ENCODE measurements at regions of chr2 and their contacts with region 1.

Region 1: GRCh38 chr2:149597668-149598326 is 10.2 kb upstream of the MMADHC start:
- DNase-seq: peak; percentile 66 to 72 (median 71)
- H3K4me3 ChIP-seq: no peak overlapping the region
- H3K4me3 Mint-ChIP-seq: peak overlapping the region in 5 of 8 donors; percentile 4 to 56 (median 28)
- H3K27ac ChIP-seq: no peak overlapping the region
- H3K27ac Mint-ChIP-seq: peak overlapping the region in 5 of 7 donors; percentile 5 to 59 (median 51)
- H3K4me1 ChIP-seq: peaks cover 14% of the 10 kb centered on the region
- H3K4me1 Mint-ChIP-seq: peaks cover 13 to 18% (median 15%) of the 10 kb centered on the region in 4 donors
- H3K27me3 ChIP-seq: no peaks in the 10 kb centered on the region
- H3K27me3 Mint-ChIP-seq: peaks cover 3 to 4% of the 10 kb centered on the region in 2 donors

Region 2: DNA sequence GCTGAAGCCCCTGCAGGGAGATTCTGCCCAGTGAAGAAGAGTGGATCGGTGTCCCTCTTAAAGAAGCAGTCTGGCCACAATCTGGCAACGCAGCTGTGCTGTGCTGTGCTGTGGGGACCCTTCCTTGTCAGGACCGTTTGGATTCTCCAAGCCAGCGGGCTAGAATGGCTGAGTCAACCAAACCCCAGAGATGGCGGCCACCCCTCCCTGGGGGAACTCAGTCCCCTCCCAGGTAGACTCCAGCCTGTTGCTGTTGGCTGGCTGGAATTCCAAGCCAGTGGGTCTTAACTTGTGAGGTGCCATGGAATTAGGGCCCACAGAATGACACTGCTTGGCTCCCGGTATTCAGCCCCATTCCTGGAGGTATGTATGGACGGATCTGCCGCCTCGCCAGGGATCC is 72.5 kb before region 1 on chr2:
- CTCF ChIA-PET with region 1: no interaction called
- POLR2A ChIA-PET with region 1: no interaction called
- intact Hi-C with region 1: no loop called
- DNase-seq: no peak
- H3K4me3 ChIP-seq: no peak overlapping the region
- H3K4me3 Mint-ChIP-seq: no peak overlapping the region
- H3K27ac ChIP-seq: no peak overlapping the region
- H3K27ac Mint-ChIP-seq: no peak overlapping the region
- H3K4me1 ChIP-seq: no peaks in the 10 kb centered on the region
- H3K4me1 Mint-ChIP-seq: no peaks in the 10 kb centered on the region
- H3K27me3 ChIP-seq: peaks cover 6% of the 10 kb centered on the region
- H3K27me3 Mint-ChIP-seq: peaks cover 6 to 14% of the 10 kb centered on the region in 2 donors

Region 3: DNA sequence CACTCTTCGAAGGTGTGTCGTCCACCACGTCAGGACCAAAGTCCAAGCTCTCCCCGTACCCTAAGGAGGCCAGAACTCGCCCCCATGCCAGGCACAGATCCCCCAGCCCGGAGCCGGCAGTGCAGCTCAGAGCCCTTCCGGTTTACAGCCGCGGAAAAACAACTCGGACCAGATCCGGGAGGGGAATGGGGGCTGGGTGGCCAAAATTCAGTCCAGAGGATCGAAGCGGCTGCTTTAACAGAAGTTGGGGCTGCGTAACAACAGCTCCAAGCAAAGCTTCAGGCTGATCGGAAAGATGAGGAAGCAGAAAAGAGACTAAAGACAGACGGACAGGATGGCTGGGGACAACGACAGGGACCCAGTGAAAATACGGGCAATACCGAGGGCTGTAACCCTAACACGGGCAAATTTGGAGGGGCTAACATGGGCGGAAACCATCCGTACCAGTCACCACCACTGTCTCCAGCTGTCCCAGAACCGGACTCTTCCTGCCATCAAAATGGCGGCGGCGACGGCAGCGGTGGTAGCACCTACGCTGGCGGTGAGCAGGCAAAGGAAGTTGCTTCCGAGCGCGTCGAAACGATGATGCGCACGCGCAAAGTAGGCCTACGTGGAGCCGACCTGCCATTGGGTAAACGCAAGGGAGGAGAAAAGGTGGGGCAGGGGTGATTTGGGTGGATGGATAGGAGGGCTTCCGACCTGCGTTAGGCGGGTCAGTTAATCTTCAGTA is 10.4 kb before region 1 on chr2 and contains the start of gene MMADHC:
- CTCF ChIA-PET with region 1: interaction called, 6 read pairs
- POLR2A ChIA-PET with region 1: interaction called, 6 read pairs
- intact Hi-C with region 1: loop called (anchors 1 kb)
- DNase-seq: peak; percentile 90 to 93 (median 93)
- H3K4me3 ChIP-seq: peak within 1 kb of the TSS; percentile 90 to 91
- H3K4me3 Mint-ChIP-seq: peak within 1 kb of the TSS; percentile 93 to 100 (median 98)
- H3K27ac ChIP-seq: peak within 1 kb of the TSS; percentile 98
- H3K27ac Mint-ChIP-seq: peak within 1 kb of the TSS; percentile 96 to 100 (median 99)
- H3K4me1 ChIP-seq: peaks cover 40% of the 10 kb centered on the region
- H3K4me1 Mint-ChIP-seq: peaks cover 22 to 55% (median 42%) of the 10 kb centered on the region in 4 donors
- H3K27me3 ChIP-seq: no peaks in the 10 kb centered on the region
- H3K27me3 Mint-ChIP-seq: peaks cover 3 to 17% of the 10 kb centered on the region in 2 donors
- total RNA-seq, gene MMADHC: 66.4 to 69.4 TPM

Region 4: GRCh38 chr2:150487537-150488429 is 890.0 kb after region 1 on chr2 and contains the start of gene RND3:
- CTCF ChIA-PET with region 1: no interaction called
- POLR2A ChIA-PET with region 1: no interaction called
- intact Hi-C with region 1: loop called (anchors 2 kb)
- DNase-seq: peak in 1 of 5 donors; percentile 1
- H3K4me3 ChIP-seq: no peak within 1 kb of the TSS
- H3K4me3 Mint-ChIP-seq: peak within 1 kb of the TSS in 6 of 8 donors; percentile 9 to 75 (median 54)
- H3K27ac ChIP-seq: no peak within 1 kb of the TSS
- H3K27ac Mint-ChIP-seq: no peak within 1 kb of the TSS
- H3K4me1 ChIP-seq: no peaks in the 10 kb centered on the region
- H3K4me1 Mint-ChIP-seq: peaks cover 4 to 21% (median 8%) of the 10 kb centered on the region in 4 donors
- H3K27me3 ChIP-seq: peaks cover 5% of the 10 kb centered on the region
- H3K27me3 Mint-ChIP-seq: peaks cover 28 to 44% of the 10 kb centered on the region in 2 donors
- total RNA-seq, gene RND3: not detected

Region 5: GRCh38 chr2:151051574-151052220 is 1453.9 kb after region 1 on chr2:
- CTCF ChIA-PET with region 1: interaction called, 90 read pairs
- POLR2A ChIA-PET with region 1: no interaction called
- intact Hi-C with region 1: loop called (anchors 1 kb)
- DNase-seq: peak in 4 of 5 donors; percentile 10 to 29 (median 21)
- H3K4me3 ChIP-seq: no peak overlapping the region
- H3K4me3 Mint-ChIP-seq: no peak overlapping the region
- H3K27ac ChIP-seq: no peak overlapping the region
- H3K27ac Mint-ChIP-seq: no peak overlapping the region
- H3K4me1 ChIP-seq: no peaks in the 10 kb centered on the region
- H3K4me1 Mint-ChIP-seq: no peaks in the 10 kb centered on the region
- H3K27me3 ChIP-seq: no peaks in the 10 kb centered on the region
- H3K27me3 Mint-ChIP-seq: peaks cover 0 to 3% of the 10 kb centered on the region in 2 donors

Region 6: DNA sequence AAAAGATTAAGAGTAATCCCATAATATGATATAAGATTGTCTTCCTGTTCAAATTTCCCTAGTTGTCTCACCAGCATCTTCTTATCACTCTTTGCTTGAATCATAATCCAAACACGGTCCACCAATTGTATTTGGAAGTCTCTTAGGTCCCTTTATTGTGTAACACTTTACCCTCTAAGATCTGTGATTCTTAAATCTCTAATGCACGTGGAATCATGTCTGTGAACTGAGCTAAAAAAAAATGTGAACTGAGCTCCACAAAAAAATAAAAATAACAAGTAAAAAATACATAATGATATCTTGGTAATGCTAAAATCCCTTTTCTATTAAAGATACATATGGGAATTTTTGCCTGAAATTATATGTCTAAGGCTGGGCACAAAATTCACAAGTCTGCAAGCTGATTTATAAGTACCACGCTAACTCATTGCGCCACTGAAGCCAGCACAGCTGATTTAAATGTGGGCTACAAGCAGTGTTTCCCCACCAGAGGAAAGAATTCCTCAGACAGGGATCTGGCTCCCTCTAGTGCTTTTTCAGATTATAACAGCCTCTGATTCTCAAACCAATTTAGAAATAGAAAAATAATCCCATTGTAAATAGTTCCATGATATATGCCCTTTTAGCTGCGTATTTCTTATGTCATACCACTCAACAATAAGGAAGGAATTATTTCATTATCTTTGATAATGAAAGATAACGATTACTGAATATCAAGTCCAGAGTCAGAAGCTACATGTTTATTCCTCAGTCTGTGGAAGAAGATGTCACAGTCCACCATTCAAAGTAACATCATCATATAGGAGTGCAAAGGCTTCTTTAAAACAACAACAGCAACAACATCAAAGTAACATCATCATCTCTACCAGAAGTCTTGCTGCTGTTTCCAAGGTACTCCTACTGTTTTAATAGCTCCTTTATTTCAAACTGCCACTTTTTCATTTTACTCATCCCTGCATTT is 1641.0 kb after region 1 on chr2:
- CTCF ChIA-PET with region 1: interaction called, 81 read pairs
- POLR2A ChIA-PET with region 1: no interaction called
- intact Hi-C with region 1: loop called (anchors 1 kb)
- DNase-seq: peak; percentile 34 to 48 (median 46)
- H3K4me3 ChIP-seq: no peak overlapping the region
- H3K4me3 Mint-ChIP-seq: no peak overlapping the region
- H3K27ac ChIP-seq: no peak overlapping the region
- H3K27ac Mint-ChIP-seq: no peak overlapping the region
- H3K4me1 ChIP-seq: no peaks in the 10 kb centered on the region
- H3K4me1 Mint-ChIP-seq: peaks cover 0 to 5% (median 0%) of the 10 kb centered on the region in 4 donors
- H3K27me3 ChIP-seq: no peaks in the 10 kb centered on the region
- H3K27me3 Mint-ChIP-seq: peaks cover 0 to 6% of the 10 kb centered on the region in 2 donors

Region 7: GRCh38 chr2:151437630-151438029 is 1839.8 kb after region 1 on chr2:
- CTCF ChIA-PET with region 1: interaction called, 16 read pairs
- POLR2A ChIA-PET with region 1: no interaction called
- intact Hi-C with region 1: loop called (anchors 1 kb)
- DNase-seq: peak in 4 of 5 donors; percentile 23 to 41 (median 32)
- H3K4me3 ChIP-seq: no peak overlapping the region
- H3K4me3 Mint-ChIP-seq: no peak overlapping the region
- H3K27ac ChIP-seq: no peak overlapping the region
- H3K27ac Mint-ChIP-seq: peak overlapping the region in 5 of 7 donors; percentile 36 to 81 (median 61)
- H3K4me1 ChIP-seq: no peaks in the 10 kb centered on the region
- H3K4me1 Mint-ChIP-seq: peaks cover 3 to 9% (median 6%) of the 10 kb centered on the region in 4 donors
- H3K27me3 ChIP-seq: no peaks in the 10 kb centered on the region
- H3K27me3 Mint-ChIP-seq: no peaks in the 10 kb centered on the region

Measured in CD4-positive, alpha-beta memory T cell (primary cell).